Endothelial cell of umbilical vein (primary cell): ENCODE measurements at regions of chr3 and their contacts with region 1.

Region 1: GRCh38 chr3:131794766-131795388 is 239.9 kb downstream of the CPNE4 start:
- DNase-seq: peak; percentile 58
- H3K4me3 ChIP-seq: no peak overlapping the region
- H3K27ac ChIP-seq: no peak overlapping the region
- H3K4me1 ChIP-seq: no peaks in the 10 kb centered on the region
- H3K27me3 ChIP-seq: no peaks in the 10 kb centered on the region
- CTCF ChIP-seq: peak; percentile 70 to 76
- POLR2A ChIP-seq: no peak

Region 2: GRCh38 chr3:131033480-131034080 is 761.3 kb before region 1 on chr3:
- CTCF ChIA-PET with region 1: interaction called, 12 read pairs
- POLR2A ChIA-PET with region 1: no interaction called
- dilution Hi-C with region 1: no loop called
- intact Hi-C with region 1: loop called (anchors 2 kb)
- DNase-seq: peak; percentile 75
- H3K4me3 ChIP-seq: no peak overlapping the region
- H3K27ac ChIP-seq: no peak overlapping the region
- H3K4me1 ChIP-seq: no peaks in the 10 kb centered on the region
- H3K27me3 ChIP-seq: no peaks in the 10 kb centered on the region
- CTCF ChIP-seq: peak; percentile 32
- POLR2A ChIP-seq: no peak

Region 3: DNA sequence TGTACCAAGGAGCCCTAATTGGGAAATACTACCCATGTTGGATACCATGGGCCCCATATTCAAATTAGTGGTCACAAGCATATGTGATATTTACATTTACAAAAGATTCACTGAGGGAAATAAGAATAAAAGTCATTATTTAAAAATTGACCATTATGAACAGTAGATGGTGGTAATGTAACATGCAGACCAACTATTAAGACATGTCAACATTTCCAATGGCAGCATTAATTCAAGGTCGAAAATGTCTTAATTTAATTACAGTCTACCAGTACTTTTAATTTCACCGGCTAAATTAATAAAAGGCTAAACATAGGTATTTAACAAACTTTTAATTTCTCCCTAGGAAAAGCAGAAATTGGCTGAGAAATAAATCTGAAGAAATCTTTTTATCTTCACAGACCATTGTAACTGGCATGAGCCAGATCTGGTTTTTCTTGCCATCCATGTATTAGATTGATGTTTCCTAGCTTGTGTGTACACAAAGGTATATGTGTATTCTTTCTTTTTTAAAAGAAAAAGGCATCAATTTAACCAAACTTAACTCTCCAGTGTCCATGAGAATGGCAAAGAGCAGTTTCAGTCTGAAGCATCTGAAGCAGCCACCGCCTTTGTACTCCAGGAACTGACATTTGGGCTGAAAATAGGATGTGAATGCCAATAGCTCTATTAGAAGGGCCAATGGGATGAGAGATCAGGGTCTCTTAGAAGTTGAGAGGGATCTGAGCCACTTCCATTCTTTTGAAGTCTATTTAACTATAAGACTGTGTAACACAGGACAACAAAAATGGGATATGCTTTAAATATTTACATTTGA is 741.6 kb before region 1 on chr3:
- CTCF ChIA-PET with region 1: interaction called, 3 read pairs
- POLR2A ChIA-PET with region 1: no interaction called
- dilution Hi-C with region 1: no loop called
- intact Hi-C with region 1: loop called (anchors 1 kb)
- DNase-seq: peak; percentile 11
- H3K4me3 ChIP-seq: no peak overlapping the region
- H3K27ac ChIP-seq: no peak overlapping the region
- H3K4me1 ChIP-seq: no peaks in the 10 kb centered on the region
- H3K27me3 ChIP-seq: no peaks in the 10 kb centered on the region
- CTCF ChIP-seq: peak in 1 of 2 donors; percentile 6
- POLR2A ChIP-seq: no peak

Region 4: GRCh38 chr3:131231710-131232389 is 563.0 kb before region 1 on chr3:
- CTCF ChIA-PET with region 1: interaction called, 4 read pairs
- POLR2A ChIA-PET with region 1: no interaction called
- dilution Hi-C with region 1: no loop called
- intact Hi-C with region 1: loop called (anchors 2 kb)
- DNase-seq: peak; percentile 8
- H3K4me3 ChIP-seq: no peak overlapping the region
- H3K27ac ChIP-seq: no peak overlapping the region
- H3K4me1 ChIP-seq: no peaks in the 10 kb centered on the region
- H3K27me3 ChIP-seq: no peaks in the 10 kb centered on the region
- CTCF ChIP-seq: no peak
- POLR2A ChIP-seq: no peak

Region 5: DNA sequence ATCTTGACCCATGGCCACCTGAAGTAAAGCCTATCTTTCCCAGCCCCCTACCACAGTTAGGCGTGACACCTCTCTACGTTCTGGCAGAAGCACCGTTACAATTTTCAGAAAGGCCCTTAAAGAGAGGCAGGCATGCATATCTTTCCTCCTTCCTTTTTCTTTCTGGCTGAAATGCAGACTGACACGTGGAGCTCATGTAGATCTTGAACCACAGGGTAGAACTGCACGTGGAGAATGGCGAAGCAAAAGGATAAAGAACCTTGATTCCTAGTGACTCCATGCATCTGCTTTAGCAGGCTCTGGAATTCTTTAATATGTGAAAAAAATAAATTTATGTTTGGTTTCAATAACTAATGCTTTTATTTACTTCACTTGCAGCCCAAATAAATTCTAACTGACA is 73.3 kb after region 1 on chr3:
- CTCF ChIA-PET with region 1: no interaction called
- POLR2A ChIA-PET with region 1: no interaction called
- dilution Hi-C with region 1: no loop called
- intact Hi-C with region 1: no loop called
- DNase-seq: no peak
- H3K4me3 ChIP-seq: no peak overlapping the region
- H3K27ac ChIP-seq: no peak overlapping the region
- H3K4me1 ChIP-seq: no peaks in the 10 kb centered on the region
- H3K27me3 ChIP-seq: no peaks in the 10 kb centered on the region
- CTCF ChIP-seq: no peak
- POLR2A ChIP-seq: no peak

Region 6: DNA sequence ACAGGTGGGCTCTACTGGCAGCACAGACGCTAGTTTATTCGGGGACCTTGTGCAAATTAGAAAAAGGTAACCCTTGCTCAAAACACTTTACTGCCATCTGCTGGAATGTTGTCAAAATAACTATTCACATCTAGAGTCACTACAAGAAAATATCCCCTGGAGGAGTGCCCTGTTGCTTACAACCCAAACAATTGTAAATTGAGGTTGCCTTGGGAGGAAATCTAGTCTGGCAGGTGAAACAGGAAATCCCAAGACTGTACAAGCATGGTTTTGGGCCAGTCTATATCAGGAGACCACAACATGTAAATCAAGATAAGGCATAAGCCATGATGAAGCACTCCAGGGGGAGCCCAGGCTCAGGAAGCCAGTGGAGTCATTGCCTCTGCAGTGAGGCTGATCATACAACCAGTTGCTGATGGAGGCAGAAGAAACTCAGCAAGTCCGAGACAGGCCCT is 385.5 kb after region 1 on chr3:
- CTCF ChIA-PET with region 1: interaction called, 3 read pairs
- POLR2A ChIA-PET with region 1: no interaction called
- dilution Hi-C with region 1: no loop called
- intact Hi-C with region 1: loop called (anchors 1 kb)
- DNase-seq: peak; percentile 62
- H3K4me3 ChIP-seq: no peak overlapping the region
- H3K27ac ChIP-seq: no peak overlapping the region
- H3K4me1 ChIP-seq: no peaks in the 10 kb centered on the region
- H3K27me3 ChIP-seq: peaks cover 9 to 22% of the 10 kb centered on the region in 2 experiments
- CTCF ChIP-seq: peak; percentile 37 to 42
- POLR2A ChIP-seq: no peak

Region 7: GRCh38 chr3:132210476-132211346 is 415.8 kb after region 1 on chr3:
- CTCF ChIA-PET with region 1: interaction called, 4 read pairs
- POLR2A ChIA-PET with region 1: no interaction called
- dilution Hi-C with region 1: no loop called
- intact Hi-C with region 1: loop called (anchors 10 kb)
- DNase-seq: peak; percentile 9
- H3K4me3 ChIP-seq: no peak overlapping the region
- H3K27ac ChIP-seq: no peak overlapping the region
- H3K4me1 ChIP-seq: no peaks in the 10 kb centered on the region
- H3K27me3 ChIP-seq: peaks cover 4 to 8% of the 10 kb centered on the region in 2 experiments
- CTCF ChIP-seq: peak; percentile 50 to 53
- POLR2A ChIP-seq: no peak